ENCODE measurements at regions of chr10 and their contacts with region 1.

Region 1: GRCh38 chr10:29849886-29850285 is 209.5 kb downstream of the JCAD start:
- DNase-seq: no peak
- H3K4me3 ChIP-seq: no peak overlapping the region
- CTCF ChIP-seq: no peak

Region 2: GRCh38 chr10:29804025-29804852 is 45.6 kb before region 1 on chr10:
- in situ Hi-C with region 1: loop called (anchors 5 kb)
- DNase-seq: peak; percentile 77
- H3K4me3 ChIP-seq: no peak overlapping the region
- CTCF ChIP-seq: no peak

Region 3: DNA sequence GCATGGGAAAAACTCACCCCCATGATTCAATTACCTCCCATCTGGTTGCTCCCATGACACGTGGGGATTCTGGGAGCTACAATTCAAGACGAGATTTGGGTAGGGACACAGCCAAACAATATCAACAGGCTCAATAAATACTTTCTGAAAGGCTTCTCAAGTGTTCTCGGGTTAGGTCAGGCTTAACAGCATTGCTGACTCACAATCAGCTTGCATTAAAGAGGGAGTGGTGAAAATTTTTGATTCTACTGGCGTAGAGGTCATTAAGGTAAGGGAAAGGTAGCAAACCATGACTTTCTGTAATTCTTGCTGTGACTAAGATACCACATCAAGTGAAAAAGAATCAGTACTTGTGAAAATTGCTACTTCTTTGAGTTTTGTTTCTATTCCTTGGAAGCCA is 83.1 kb after region 1 on chr10:
- in situ Hi-C with region 1: no loop called
- DNase-seq: no peak
- H3K4me3 ChIP-seq: no peak overlapping the region
- CTCF ChIP-seq: no peak

Measured in astrocyte of the cerebellum (primary cell).